CD4-positive, alpha-beta memory T cell (primary cell): ENCODE measurements at regions of chr17 and their contacts with region 1.

Region 1: DNA sequence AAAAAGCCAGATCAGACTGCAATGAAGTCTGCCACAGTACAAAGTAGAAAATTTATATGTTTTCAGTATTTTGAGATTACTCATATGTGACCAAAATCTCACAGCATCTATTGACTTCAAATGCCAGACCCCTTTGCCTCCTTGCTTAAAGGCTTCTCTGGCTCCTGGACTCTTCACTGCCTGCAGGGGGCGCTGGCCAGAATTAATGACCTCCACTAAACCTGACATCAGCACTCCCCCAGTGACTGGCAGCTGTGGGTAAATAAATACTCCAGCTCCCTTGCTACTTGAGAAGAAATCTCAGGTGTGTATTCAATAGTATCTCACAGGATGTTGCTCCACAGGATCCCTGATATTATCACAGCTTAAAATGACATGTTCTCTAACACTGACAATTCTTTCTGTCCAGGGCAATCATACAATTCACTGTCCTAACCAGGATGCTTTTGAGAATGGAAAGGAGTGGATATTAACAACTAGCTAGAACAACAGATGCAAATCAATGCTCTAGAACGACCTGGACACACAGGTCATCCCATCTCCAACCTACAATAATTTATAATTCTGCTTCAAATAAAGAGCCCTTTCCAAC is 4.0 kb downstream of the BECN1 start:
- DNase-seq: peak; percentile 46 to 66 (median 49)
- H3K4me3 ChIP-seq: no peak overlapping the region
- H3K4me3 Mint-ChIP-seq: peak overlapping the region in 1 of 8 donors; percentile 26
- H3K27ac ChIP-seq: no peak overlapping the region
- H3K27ac Mint-ChIP-seq: peak overlapping the region; percentile 18 to 65 (median 36)
- H3K4me1 ChIP-seq: peaks cover 15% of the 10 kb centered on the region
- H3K4me1 Mint-ChIP-seq: peaks cover 16 to 41% (median 25%) of the 10 kb centered on the region in 4 donors
- H3K27me3 ChIP-seq: no peaks in the 10 kb centered on the region
- H3K27me3 Mint-ChIP-seq: no peaks in the 10 kb centered on the region

Region 2: DNA sequence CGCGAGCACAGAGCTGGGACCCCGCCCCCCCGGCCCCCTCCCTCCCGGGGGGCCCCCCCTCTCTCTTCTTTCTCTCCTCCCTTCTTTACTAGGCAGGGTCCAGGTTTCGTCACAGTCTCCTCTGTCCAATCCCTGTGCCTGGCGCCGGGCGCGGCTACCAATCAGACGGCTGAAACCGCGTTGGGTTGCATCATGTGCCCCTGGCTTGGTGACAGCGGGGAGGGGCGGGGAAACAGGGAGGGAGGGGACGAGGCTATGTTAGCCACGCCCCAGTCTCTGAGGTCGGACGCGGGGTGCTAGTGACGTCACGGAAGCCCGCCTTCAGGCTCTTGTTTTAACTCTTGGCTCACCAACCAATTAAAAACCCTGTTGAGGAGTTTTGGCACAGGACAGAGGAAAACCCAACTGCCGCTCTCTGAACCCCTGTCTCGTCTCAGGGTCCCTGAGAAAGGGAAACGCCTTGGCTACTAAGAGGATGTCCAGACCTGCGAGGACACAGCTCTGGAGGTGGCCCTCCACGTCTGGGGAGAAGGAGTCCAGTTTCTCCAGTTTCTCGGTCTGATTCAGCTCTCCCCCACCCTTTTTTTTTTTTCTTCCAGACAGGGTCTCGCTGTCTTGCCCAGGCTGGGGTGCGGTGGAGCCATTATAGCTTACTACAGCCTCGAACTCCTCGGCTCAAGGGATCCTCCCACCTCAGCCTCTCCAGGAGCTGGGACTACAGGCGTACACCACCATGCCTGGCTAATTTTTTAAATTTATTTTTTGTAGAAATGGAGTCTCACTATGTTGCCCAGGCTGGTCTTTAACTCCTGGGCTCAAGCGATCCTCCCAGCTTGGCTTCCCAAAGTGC is 142.8 kb before region 1 on chr17:
- CTCF ChIA-PET with region 1: no interaction called
- POLR2A ChIA-PET with region 1: no interaction called
- intact Hi-C with region 1: loop called (anchors 2 kb)
- DNase-seq: peak; percentile 91 to 98 (median 93)
- H3K4me3 ChIP-seq: peak overlapping the region; percentile 63 to 75
- H3K4me3 Mint-ChIP-seq: peak overlapping the region; percentile 86 to 97 (median 90)
- H3K27ac ChIP-seq: peak overlapping the region; percentile 42
- H3K27ac Mint-ChIP-seq: peak overlapping the region; percentile 79 to 94 (median 89)
- H3K4me1 ChIP-seq: peaks cover 74% of the 10 kb centered on the region
- H3K4me1 Mint-ChIP-seq: peaks cover 32 to 70% (median 46%) of the 10 kb centered on the region in 4 donors
- H3K27me3 ChIP-seq: peaks cover 36% of the 10 kb centered on the region
- H3K27me3 Mint-ChIP-seq: peaks cover 23 to 27% of the 10 kb centered on the region in 2 donors

Region 3: DNA sequence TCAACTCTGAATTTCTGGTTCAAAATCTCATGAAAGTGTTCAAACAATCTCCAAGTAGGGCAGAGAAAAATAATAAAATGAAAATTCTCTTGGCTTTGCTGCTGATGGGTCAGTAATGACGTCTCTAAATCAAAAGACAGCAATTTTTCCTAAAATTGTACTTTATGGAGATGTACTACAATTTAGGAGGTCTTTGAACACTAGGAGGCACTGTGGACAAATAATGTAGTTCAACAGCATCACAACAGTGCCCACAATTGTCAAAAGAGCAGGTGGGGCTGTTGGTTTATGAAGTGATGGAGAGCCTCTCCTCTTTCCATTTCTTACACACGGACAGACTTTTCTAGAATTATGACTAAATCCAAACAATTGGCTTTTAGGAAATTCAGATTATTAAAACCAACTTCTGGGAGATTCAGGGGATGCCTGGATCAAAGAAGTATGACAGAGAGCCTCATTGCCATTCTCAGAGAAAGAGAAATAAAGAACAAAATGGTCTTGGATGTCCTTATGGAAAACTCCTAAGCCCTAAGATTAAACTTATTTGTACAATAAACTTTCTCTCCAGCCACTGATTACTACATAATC is 99.0 kb before region 1 on chr17:
- CTCF ChIA-PET with region 1: no interaction called
- POLR2A ChIA-PET with region 1: no interaction called
- intact Hi-C with region 1: loop called (anchors 1 kb)
- DNase-seq: peak in 4 of 5 donors; percentile 55 to 68 (median 62)
- H3K4me3 ChIP-seq: no peak overlapping the region
- H3K4me3 Mint-ChIP-seq: no peak overlapping the region
- H3K27ac ChIP-seq: no peak overlapping the region
- H3K27ac Mint-ChIP-seq: no peak overlapping the region
- H3K4me1 ChIP-seq: no peaks in the 10 kb centered on the region
- H3K4me1 Mint-ChIP-seq: peaks cover 3 to 14% (median 11%) of the 10 kb centered on the region in 4 donors
- H3K27me3 ChIP-seq: no peaks in the 10 kb centered on the region
- H3K27me3 Mint-ChIP-seq: no peaks in the 10 kb centered on the region

Region 4: GRCh38 chr17:42773290-42774035 is 46.6 kb before region 1 on chr17 and contains the start of gene VPS25:
- CTCF ChIA-PET with region 1: interaction called, 8 read pairs
- POLR2A ChIA-PET with region 1: interaction called, 27 read pairs
- intact Hi-C with region 1: no loop called
- DNase-seq: peak; percentile 70 to 77 (median 71)
- H3K4me3 ChIP-seq: peak within 1 kb of the TSS; percentile 90 to 100
- H3K4me3 Mint-ChIP-seq: peak within 1 kb of the TSS; percentile 98 to 99 (median 99)
- H3K27ac ChIP-seq: peak within 1 kb of the TSS; percentile 81
- H3K27ac Mint-ChIP-seq: peak within 1 kb of the TSS; percentile 91 to 99 (median 98)
- H3K4me1 ChIP-seq: peaks cover 17% of the 10 kb centered on the region
- H3K4me1 Mint-ChIP-seq: peaks cover 11 to 28% (median 19%) of the 10 kb centered on the region in 4 donors
- H3K27me3 ChIP-seq: no peaks in the 10 kb centered on the region
- H3K27me3 Mint-ChIP-seq: no peaks in the 10 kb centered on the region
- total RNA-seq, gene VPS25: 39.3 to 43.6 TPM

Region 5: DNA sequence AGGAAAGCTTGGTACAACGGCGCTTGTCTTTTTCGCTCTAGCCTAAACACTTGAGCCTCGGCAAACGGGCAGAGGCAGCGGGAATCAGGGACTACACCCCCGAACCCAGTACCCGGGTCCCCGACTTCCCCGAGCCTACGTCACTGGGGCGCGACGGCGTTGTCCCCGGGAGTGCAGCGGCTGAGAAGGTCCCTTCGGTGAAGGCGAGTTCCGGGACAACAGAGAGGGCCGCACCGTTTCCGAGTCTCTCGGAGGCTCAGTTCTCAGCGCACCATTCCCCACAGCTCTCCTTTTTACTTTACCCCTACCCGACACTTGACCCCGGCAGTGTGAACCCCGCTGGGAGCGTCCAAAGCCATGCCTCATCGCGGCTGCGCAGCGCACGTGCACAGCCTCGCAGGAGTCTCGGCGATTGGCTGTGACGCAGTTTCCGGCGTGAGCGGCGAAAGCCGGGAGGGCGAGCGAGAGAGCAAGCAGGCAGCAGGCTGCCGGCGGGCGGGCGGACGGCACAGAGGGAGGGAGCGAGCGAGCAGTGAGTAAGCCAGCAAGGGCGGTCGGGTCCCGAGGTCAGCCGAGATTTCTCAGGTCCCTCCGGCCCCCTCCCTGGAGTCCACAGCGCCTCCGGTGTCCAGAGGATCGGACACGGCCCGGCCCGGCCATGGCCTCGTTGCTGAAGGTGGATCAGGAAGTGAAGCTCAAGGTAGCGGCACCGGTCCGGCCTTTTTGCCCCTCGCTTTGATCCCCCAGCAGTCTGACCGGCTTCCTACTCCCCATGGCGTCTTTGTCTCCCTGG is 13.1 kb after region 1 on chr17 and contains the start of gene PSME3:
- CTCF ChIA-PET with region 1: interaction called, 16 read pairs
- POLR2A ChIA-PET with region 1: interaction called, 61 read pairs
- intact Hi-C with region 1: loop called (anchors 1 kb)
- DNase-seq: peak; percentile 88 to 92 (median 90)
- H3K4me3 ChIP-seq: peak within 1 kb of the TSS; percentile 72 to 97
- H3K4me3 Mint-ChIP-seq: peak within 1 kb of the TSS; percentile 93 to 97 (median 96)
- H3K27ac ChIP-seq: peak within 1 kb of the TSS; percentile 94
- H3K27ac Mint-ChIP-seq: peak within 1 kb of the TSS; percentile 99 to 100 (median 99)
- H3K4me1 ChIP-seq: peaks cover 17% of the 10 kb centered on the region
- H3K4me1 Mint-ChIP-seq: peaks cover 19 to 31% (median 25%) of the 10 kb centered on the region in 4 donors
- H3K27me3 ChIP-seq: no peaks in the 10 kb centered on the region
- H3K27me3 Mint-ChIP-seq: no peaks in the 10 kb centered on the region
- total RNA-seq, gene PSME3: 65.1 to 69.9 TPM

Region 6: GRCh38 chr17:42843358-42843934 is 23.4 kb after region 1 on chr17:
- CTCF ChIA-PET with region 1: interaction called, 10 read pairs
- POLR2A ChIA-PET with region 1: interaction called, 3 read pairs
- intact Hi-C with region 1: no loop called
- DNase-seq: peak in 2 of 5 donors; percentile 16 to 19
- H3K4me3 ChIP-seq: no peak overlapping the region
- H3K4me3 Mint-ChIP-seq: no peak overlapping the region
- H3K27ac ChIP-seq: no peak overlapping the region
- H3K27ac Mint-ChIP-seq: peak overlapping the region in 1 of 7 donors; percentile 58
- H3K4me1 ChIP-seq: no peaks in the 10 kb centered on the region
- H3K4me1 Mint-ChIP-seq: peaks cover 0 to 10% (median 6%) of the 10 kb centered on the region in 4 donors
- H3K27me3 ChIP-seq: no peaks in the 10 kb centered on the region
- H3K27me3 Mint-ChIP-seq: no peaks in the 10 kb centered on the region

Region 7: GRCh38 chr17:42857389-42857788 is 37.3 kb after region 1 on chr17:
- CTCF ChIA-PET with region 1: no interaction called
- POLR2A ChIA-PET with region 1: no interaction called
- intact Hi-C with region 1: no loop called
- DNase-seq: no peak
- H3K4me3 ChIP-seq: no peak overlapping the region
- H3K4me3 Mint-ChIP-seq: no peak overlapping the region
- H3K27ac ChIP-seq: no peak overlapping the region
- H3K27ac Mint-ChIP-seq: no peak overlapping the region
- H3K4me1 ChIP-seq: no peaks in the 10 kb centered on the region
- H3K4me1 Mint-ChIP-seq: no peaks in the 10 kb centered on the region
- H3K27me3 ChIP-seq: no peaks in the 10 kb centered on the region
- H3K27me3 Mint-ChIP-seq: peaks cover 5 to 6% of the 10 kb centered on the region in 2 donors